HepG2 (cell line): ENCODE measurements at regions of chr7 and their contacts with region 1.

Region 1: DNA sequence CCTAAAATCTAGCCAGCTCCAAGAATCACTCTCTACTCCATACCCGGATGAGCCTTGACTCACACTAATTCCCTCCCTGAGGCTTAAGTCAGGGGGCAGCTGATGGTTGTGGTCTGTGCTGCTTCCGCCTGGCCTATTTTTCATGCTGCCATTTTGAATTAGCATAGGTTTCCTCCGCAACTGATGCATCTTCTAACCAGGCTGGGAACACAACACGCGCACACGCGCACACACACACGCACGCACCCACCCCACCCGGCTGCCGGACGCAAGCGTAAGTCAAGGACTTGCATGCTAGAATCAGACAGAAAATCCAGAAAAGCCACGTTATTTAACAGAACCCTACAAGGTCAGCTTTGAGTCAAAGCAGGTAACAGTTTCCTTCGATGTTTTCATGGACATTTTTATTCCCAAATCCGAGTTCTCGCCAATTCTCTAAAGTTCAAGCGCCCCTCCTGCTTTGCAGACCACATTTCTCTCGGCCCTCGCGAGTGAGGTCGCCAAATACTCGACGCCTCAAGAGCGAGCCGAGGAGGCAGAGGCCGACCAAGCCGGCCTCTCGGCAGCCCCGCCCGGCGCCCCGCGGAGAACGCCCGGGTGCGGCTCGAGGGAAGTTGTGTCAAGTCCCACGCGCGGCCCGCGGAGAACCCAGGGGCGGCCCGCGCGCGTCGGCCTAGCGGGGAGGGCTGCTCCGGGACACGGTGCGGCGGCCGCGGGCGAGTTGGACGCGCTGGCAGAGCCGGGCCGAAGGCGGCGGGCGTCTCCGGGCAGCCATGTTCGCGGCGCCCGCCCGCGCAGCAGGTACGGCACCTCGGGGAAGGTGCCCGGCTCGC is 961 bp downstream of the SCRN1 start:
- DNase-seq: peak; percentile 57
- ATAC-seq: peak; percentile 57
- H3K4me3 ChIP-seq: peak overlapping the region; percentile 96 to 99 (median 97)
- H3K27ac ChIP-seq: peak overlapping the region; percentile 86
- H3K4me1 ChIP-seq: peaks cover 37% of the 10 kb centered on the region
- H3K27me3 ChIP-seq: no peaks in the 10 kb centered on the region
- CTCF ChIP-seq: no peak
- EP300 ChIP-seq: no peak
- POLR2A ChIP-seq: peak in 1 of 2 experiments; percentile 54; a peak in 3 of 4 replicates
- RAD21 ChIP-seq: no peak

Region 2: DNA sequence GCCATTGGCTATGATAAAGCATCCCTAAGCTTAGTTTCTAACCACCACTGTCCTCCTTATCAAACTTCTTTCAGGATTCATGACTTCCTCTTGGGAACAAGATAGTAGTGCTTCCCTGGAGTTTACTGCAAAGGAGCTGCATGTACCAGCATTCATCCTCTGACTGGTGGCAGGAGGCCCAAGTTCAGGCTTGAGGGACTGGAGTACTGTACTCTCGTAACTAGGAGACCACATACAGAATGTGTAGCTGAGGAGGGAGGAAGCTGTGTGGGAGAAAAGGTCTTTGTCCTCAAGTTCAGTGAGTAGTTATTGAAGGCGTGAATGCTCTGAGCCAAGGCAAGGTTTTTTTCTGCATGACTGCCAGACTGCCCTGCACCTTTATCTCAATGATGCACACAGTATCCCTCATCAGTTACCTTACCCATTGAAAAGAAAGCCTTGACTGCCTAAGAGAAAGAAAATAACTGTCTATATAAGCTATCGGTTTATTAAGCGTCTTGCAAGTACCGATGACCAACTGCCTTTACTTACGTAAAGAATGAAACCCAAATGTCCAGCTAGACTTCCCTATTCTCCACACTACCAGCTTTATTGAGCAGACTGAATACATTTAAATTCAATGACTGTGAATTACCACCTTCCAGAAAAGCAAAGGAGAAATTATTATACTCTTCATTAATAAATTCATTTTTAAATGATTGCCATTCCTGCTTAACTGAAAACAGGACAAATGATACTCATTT is 11.8 kb before region 1 on chr7:
- CTCF ChIA-PET with region 1: no interaction called
- POLR2A ChIA-PET with region 1: interaction called, 11 read pairs
- in situ Hi-C with region 1: no loop called
- intact Hi-C with region 1: no loop called
- DNase-seq: no peak
- ATAC-seq: no peak
- H3K4me3 ChIP-seq: no peak overlapping the region
- H3K27ac ChIP-seq: no peak overlapping the region
- H3K4me1 ChIP-seq: no peaks in the 10 kb centered on the region
- H3K27me3 ChIP-seq: no peaks in the 10 kb centered on the region
- CTCF ChIP-seq: no peak
- EP300 ChIP-seq: no peak
- POLR2A ChIP-seq: no peak
- RAD21 ChIP-seq: no peak

Region 3: DNA sequence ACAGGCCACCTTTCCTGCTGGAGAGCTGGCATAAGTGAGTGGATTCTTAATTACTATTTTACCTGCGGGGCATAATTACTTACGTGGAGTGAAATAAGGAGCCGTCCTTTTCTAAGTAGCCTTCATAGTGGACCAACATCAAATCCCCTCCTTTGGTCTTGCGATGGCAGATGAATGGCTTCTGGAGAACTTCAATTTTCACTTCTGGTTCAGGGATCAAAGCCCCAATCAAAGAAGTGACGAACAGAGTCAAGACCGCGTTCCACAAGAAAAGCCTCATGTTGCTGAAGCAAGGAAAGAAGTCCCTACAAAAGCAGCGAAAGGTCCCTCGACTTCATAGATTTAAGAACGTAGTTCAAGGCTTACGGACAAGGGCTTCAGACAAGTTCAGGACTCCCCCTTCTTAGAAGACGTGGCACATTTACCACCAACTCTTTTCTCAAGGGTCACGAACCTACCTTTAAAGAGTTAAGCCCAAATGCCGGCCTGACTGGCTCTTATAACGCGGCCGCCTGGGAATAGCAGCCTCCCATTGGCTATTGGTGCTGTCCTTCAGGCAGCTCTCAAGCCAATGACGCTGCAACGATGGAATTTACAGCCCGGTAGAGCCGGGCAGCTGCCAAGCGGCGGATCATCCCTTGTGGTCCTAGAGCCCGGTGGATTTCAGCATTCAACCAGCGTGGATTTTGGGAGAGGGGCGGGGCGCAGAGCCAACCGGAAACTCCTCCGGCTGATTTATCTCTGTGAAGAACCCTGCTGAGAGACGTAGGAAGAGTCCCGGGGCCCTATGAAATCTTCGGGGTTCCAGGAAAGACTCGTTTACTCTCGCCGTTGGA is 37.8 kb after region 1 on chr7 and contains the start of gene FKBP14:
- CTCF ChIA-PET with region 1: no interaction called
- POLR2A ChIA-PET with region 1: interaction called, 22 read pairs
- in situ Hi-C with region 1: loop called (anchors 5 kb)
- intact Hi-C with region 1: loop called (anchors 1 kb)
- DNase-seq: peak; percentile 98
- ATAC-seq: peak; percentile 89
- H3K4me3 ChIP-seq: peak within 1 kb of the TSS; percentile 82 to 96 (median 95)
- H3K27ac ChIP-seq: peak within 1 kb of the TSS; percentile 89
- H3K4me1 ChIP-seq: peaks cover 52% of the 10 kb centered on the region
- H3K27me3 ChIP-seq: no peaks in the 10 kb centered on the region; a peak in 1 of 5 replicates
- CTCF ChIP-seq: no peak
- EP300 ChIP-seq: no peak; a peak in 1 of 4 replicates
- POLR2A ChIP-seq: peak; percentile 69 to 79
- RAD21 ChIP-seq: no peak
- total RNA-seq, gene FKBP14: 20.2 and 32.3 TPM in 2 replicates

Region 4: GRCh38 chr7:30164567-30164966 is 175.9 kb after region 1 on chr7:
- CTCF ChIA-PET with region 1: no interaction called
- POLR2A ChIA-PET with region 1: no interaction called
- in situ Hi-C with region 1: no loop called
- intact Hi-C with region 1: no loop called
- DNase-seq: peak; percentile 60
- ATAC-seq: peak; percentile 50
- H3K4me3 ChIP-seq: no peak overlapping the region
- H3K27ac ChIP-seq: no peak overlapping the region
- H3K4me1 ChIP-seq: peaks cover 60% of the 10 kb centered on the region
- H3K27me3 ChIP-seq: no peaks in the 10 kb centered on the region
- CTCF ChIP-seq: peak; percentile 71
- EP300 ChIP-seq: no peak
- POLR2A ChIP-seq: no peak
- RAD21 ChIP-seq: peak; percentile 72